ENCODE measurements at regions of chr17 and their contacts with region 1.

Region 1: DNA sequence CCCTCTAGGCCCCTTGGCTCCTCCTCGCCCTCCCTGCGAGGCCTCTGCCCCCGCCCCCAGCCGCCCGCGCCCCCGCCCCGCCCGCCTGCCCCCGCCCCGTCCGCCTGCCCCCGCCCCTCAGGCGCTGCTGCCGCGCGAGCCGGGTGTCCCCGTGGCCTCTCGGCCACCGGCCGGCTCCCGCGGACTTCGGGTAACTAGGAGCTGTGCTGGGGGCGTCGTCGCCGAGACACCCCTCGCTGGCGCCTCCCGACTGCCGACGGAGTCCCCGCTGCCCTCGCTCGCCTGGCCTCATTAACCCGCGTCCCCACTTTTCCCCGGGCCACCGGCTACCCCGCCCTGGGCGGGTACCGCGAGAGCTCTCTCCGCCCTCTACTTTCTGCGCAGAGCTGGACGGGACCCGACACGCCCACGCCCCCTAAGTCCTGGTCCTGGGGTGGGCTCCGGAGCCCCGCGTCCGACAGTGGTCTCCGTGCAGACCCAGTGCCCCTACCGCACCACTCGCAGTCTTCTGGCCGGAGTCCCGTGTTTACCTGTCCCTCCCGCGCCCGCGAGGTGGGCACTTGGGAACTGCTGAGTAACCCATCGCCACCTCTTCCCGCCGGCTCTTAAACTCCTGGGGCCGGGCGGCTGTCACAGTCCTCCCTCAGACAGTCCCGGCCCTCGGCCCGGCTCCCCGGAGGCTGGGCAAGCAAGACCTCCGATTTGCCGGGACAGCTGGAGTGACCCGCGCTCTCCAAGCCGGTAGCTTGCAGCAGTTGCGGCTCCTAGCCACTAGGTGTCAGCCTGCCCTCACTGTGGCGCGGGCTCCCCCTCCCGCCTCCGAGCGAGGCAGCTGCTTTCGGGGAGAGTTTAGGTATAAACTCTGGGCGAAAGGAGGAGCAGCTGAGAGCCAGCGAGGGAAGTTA is at the start of gene TLCD1:
- DNase-seq: peak; percentile 91 to 97 (median 92)
- ATAC-seq: peak; percentile 70 to 78 (median 73)
- H3K4me3 ChIP-seq: peak within 1 kb of the TSS; percentile 49 to 90 (median 82)
- H3K27ac ChIP-seq: peak within 1 kb of the TSS in 11 of 12 donors; percentile 27 to 97 (median 66)
- H3K4me1 ChIP-seq: peaks cover 0 to 56% (median 33%) of the 10 kb centered on the region in 12 donors
- H3K27me3 ChIP-seq: peaks cover 0 to 4% (median 0%) of the 10 kb centered on the region in 9 donors
- CTCF ChIP-seq: peak in 11 of 12 donors; percentile 99 to 100 (median 99)
- POLR2A ChIP-seq: peak in 1 of 2 donors; percentile 3
- total RNA-seq, gene TLCD1: 0.52 to 4.8 (median 1.7) TPM

Region 2: GRCh38 chr17:28661635-28662537 is 64.6 kb before region 1 on chr17 and contains the starts of genes SDF2 and SUPT6H:
- intact Hi-C with region 1: no loop called
- DNase-seq: peak; percentile 91 to 94 (median 93)
- ATAC-seq: peak; percentile 90 to 97 (median 96)
- H3K4me3 ChIP-seq: peak within 1 kb of the TSS; percentile 55 to 97 (median 86)
- H3K27ac ChIP-seq: peak within 1 kb of the TSS; percentile 84 to 99 (median 96)
- H3K4me1 ChIP-seq: peaks cover 0 to 49% (median 29%) of the 10 kb centered on the region in 12 donors
- H3K27me3 ChIP-seq: no peaks in the 10 kb centered on the region
- CTCF ChIP-seq: no peak
- POLR2A ChIP-seq: peak in 1 of 2 donors; percentile 80
- total RNA-seq, gene SDF2: 19.6 to 39.1 (median 34.2) TPM
- total RNA-seq, gene SUPT6H: 37.2 to 91.6 (median 49.1) TPM

Region 3: DNA sequence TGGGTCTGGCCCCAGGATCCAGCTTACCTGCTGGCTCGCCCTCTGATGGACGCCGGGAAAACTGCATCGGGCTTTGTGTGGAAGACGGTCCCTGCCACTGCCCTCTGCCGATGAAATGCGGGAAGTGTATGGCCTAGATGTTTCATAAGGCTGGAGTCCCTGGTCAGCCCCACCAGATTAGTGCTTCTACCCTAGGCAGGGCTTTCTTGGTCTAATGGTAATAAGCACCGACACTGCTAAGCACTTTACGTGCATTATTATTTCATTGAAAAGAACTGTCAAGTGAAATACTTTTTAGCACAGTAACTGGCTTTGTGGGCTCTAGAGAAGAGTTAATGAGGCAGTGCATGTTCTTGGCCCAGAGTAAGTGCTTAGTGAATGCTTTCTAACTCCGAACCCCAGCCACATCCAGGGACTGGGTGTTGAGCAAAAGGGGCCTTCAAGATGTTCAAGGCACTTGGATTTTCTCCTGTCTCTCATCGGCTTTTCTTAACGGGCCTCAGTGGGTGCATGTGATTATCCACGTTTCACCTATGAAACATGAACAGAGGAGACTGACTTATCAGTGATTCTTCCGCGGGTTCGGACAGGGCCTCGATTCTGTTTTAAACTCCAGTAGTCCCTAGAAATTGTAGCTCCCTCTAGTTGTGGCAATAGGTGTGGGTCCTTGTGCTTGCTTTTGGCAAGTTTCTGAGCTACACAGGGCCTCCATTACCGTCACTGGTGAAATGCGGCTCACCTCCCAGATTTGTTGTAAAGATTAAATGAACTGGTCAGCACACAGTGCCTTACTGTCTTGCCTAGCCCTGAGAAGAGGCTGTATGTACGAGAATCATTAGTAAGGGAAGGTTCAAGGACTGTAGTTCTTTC is 23.9 kb after region 1 on chr17:
- intact Hi-C with region 1: loop called in 9 of 10 experiments (anchors 1 to 2 kb)
- DNase-seq: peak; percentile 88 to 94 (median 91)
- ATAC-seq: peak; percentile 77 to 87 (median 81)
- H3K4me3 ChIP-seq: no peak overlapping the region
- H3K27ac ChIP-seq: no peak overlapping the region
- H3K4me1 ChIP-seq: peaks cover 0 to 32% (median 20%) of the 10 kb centered on the region in 12 donors
- H3K27me3 ChIP-seq: no peaks in the 10 kb centered on the region
- CTCF ChIP-seq: peak; percentile 97 to 100 (median 100)
- POLR2A ChIP-seq: no peak

Region 4: GRCh38 chr17:28792877-28793661 is 66.6 kb after region 1 on chr17:
- intact Hi-C with region 1: no loop called
- DNase-seq: no peak
- ATAC-seq: no peak
- H3K4me3 ChIP-seq: no peak overlapping the region
- H3K27ac ChIP-seq: no peak overlapping the region
- H3K4me1 ChIP-seq: peaks cover 0 to 12% (median 0%) of the 10 kb centered on the region in 12 donors
- H3K27me3 ChIP-seq: no peaks in the 10 kb centered on the region
- CTCF ChIP-seq: no peak
- POLR2A ChIP-seq: no peak

Region 5: DNA sequence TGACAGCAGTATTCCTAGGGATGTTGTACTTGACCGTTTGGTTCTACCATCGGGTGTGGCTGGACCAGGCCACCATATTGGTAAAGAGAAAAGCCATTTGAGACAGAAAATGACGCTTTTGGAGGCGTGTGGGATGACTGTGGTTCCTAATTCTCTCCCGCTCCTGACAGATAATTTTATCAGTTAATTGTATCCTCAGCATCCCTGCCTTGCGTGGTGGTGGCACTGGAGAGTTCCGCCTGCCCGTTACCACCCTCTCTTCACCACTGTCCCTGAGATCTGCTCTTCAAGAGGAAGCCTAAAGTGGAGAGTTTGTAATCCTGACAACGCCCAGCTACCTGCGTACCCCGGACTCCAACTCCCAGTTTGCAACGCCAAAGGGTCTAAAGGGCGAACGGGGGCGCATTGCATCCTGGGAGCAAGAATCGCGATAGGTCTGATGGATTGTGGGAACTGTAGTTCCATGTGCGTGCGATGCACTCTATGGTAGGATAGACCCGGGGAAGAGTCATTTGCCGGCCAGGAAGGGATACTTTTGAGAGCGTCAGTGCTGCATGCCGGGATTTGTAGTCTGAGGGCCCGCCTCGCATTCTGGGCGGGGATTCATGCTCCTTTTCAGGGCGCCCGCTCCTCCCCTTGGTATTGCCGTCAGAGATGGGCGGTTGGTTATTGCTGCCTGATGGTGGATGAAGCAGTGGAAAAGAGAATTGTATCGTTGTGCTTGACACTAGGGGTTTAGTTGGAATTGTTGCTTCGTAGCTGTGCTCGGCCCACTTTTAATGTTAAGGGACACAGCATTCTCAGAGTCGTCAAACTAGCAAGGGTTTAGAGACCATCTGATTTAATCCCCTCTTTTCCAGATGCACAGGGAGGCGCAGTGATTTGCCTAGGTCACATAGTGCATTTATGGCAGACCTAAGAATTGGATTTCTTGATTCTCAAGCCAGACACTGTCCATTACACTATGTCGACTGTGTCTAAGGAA is 225.8 kb after region 1 on chr17:
- intact Hi-C with region 1: loop called in 7 of 10 experiments (anchors 1 to 5 kb)
- DNase-seq: peak; percentile 94 to 98 (median 98)
- ATAC-seq: peak; percentile 82 to 91 (median 88)
- H3K4me3 ChIP-seq: peak overlapping the region; percentile 27 to 99 (median 74)
- H3K27ac ChIP-seq: peak overlapping the region; percentile 90 to 100 (median 99)
- H3K4me1 ChIP-seq: peaks cover 0 to 40% (median 19%) of the 10 kb centered on the region in 12 donors
- H3K27me3 ChIP-seq: no peaks in the 10 kb centered on the region
- CTCF ChIP-seq: peak in 1 of 12 donors; percentile 15
- POLR2A ChIP-seq: peak in 1 of 2 donors; percentile 46

Region 6: DNA sequence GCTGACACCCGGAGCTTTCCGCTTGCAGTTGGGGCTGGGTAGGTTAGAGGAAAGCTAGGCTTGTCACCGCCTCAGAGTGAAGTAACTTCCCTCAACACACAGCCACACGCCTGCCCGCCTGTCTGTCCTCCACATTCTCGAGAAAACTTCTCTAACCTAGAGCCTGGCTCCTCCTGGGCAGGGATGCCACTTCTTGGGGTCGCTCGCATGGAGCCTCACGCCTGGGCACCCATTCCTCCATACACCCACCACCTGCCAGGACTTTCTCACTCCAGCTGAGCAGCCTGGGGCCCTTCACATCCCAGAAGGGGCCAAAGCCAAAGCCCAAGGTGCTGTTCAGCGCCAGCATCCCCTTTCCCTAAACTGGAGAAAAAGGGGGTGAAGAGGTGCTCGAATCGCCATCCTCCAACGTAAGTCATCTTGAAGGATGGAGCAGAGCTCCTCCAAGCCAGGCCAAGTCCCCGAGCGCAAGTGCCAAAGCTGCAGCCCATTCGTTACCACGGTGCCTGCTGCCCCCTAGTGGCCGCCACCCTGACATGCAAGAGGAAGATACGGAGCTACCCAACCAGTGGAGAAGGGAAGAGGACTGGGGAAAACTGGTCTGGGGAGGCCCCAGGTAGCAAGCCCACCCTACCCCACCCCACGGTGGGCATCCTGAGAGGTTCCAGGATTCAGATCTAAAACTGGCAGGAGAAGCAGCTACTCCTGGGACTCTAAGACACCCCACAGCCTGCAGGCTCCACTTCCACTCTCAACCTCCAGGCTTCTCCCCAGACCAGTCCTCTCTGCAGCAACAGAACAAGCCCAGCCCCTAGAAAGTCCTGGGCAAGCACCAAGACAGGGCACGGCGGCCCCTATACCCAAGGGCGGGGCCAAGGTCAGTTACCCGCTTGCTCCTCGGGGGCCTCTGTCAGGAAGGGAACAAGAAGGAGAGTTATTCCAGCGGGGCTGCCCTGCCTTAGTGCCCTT is 390.6 kb after region 1 on chr17:
- intact Hi-C with region 1: loop called in 1 of 10 experiments (anchors 5 kb)
- DNase-seq: peak; percentile 69 to 91 (median 79)
- ATAC-seq: peak in 3 of 4 donors; percentile 40 to 50 (median 47)
- H3K4me3 ChIP-seq: no peak overlapping the region
- H3K27ac ChIP-seq: peak overlapping the region in 2 of 12 donors; percentile 20
- H3K4me1 ChIP-seq: peaks cover 9 to 39% (median 21%) of the 10 kb centered on the region in 12 donors
- H3K27me3 ChIP-seq: no peaks in the 10 kb centered on the region
- CTCF ChIP-seq: peak; percentile 87 to 96 (median 92)
- POLR2A ChIP-seq: no peak

Measured in heart left ventricle (tissue), 16 donors.